Panc1 (cell line): ENCODE measurements at regions of chr13 and their contacts with region 1.

Region 1: DNA sequence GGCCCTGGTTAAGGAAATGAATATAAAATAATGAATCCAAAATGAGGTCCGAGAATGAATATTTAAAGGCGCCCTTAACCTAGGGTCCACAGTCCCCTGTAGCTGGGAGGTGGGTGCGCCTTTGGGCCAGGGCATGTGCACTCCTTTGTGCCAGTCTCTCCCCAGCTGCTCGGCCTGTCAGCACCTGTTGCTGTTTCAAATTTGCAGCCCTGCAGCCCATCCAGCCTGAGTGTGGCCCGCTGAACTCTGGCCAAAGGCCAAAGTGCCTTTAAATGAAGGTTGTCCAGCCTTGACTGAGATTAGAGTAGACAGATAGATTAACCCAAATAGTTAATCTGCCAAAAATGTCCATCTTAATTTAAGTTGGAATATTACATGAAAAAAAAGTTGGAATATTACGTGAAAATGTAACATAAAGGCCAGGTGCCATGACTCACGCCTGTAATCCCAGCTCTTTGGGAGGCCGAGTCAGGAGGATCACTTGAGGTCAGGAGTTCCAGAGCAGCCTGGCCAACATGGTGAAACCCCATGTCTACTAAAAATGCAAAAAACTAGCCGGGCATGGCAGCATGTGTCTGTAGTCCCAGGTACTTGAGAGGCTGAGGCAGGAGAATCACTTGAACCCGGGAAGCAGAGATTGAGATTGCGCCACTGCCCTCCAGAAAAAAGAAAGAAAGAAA is 25.4 kb downstream of the TPT1 start:
- DNase-seq: no peak
- ATAC-seq: no peak
- H3K4me3 ChIP-seq: no peak overlapping the region
- H3K27ac ChIP-seq: no peak overlapping the region
- H3K4me1 ChIP-seq: peaks cover 4% of the 10 kb centered on the region; the same call in 1 of the 2 replicates
- H3K27me3 ChIP-seq: no peaks in the 10 kb centered on the region
- CTCF ChIP-seq: no peak

Region 2: DNA sequence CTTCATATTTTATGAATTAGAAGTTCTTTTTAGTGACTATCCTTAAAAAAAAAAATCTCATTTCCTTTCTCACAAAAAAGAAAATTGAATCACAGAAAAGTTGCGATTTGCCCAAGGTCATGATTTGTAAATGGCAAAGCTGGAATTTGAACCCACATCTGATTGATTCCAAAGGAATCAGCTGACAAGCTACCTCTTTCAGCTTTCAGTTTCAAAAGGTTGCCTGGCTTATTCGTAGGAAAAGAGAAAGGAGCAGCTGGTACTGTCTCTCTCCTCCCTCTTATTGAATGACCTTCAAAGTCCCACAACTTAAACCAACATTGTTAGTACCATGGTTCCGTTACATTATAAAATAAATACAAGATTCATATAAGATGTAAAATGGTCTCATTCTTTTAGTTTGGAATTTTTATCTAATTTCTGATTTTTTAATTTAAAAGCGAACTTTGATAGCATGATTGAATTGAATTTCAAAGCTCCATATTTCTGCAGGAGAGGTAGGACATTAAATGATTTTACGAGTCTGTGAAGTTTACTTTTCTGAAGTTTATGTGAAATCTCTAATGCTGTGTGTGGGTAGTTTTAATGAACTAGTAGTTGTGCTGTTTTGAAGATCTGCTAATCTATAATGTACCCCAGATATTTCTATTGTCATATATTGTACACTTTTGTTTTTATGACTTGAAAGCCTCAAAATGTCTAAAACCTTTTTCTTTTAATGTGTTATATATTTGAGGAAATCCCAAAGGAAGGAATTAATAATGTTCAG is 96.3 kb before region 1 on chr13:
- CTCF ChIA-PET with region 1: no interaction called
- POLR2A ChIA-PET with region 1: interaction called, 14 read pairs
- in situ Hi-C with region 1: no loop called
- intact Hi-C with region 1: no loop called
- DNase-seq: no peak
- ATAC-seq: no peak
- H3K4me3 ChIP-seq: no peak overlapping the region
- H3K27ac ChIP-seq: peak overlapping the region; percentile 39; the same call in 1 of the 2 replicates
- H3K4me1 ChIP-seq: peaks cover 21% of the 10 kb centered on the region; the same call in 1 of the 2 replicates
- H3K27me3 ChIP-seq: no peaks in the 10 kb centered on the region
- CTCF ChIP-seq: no peak

Region 3: DNA sequence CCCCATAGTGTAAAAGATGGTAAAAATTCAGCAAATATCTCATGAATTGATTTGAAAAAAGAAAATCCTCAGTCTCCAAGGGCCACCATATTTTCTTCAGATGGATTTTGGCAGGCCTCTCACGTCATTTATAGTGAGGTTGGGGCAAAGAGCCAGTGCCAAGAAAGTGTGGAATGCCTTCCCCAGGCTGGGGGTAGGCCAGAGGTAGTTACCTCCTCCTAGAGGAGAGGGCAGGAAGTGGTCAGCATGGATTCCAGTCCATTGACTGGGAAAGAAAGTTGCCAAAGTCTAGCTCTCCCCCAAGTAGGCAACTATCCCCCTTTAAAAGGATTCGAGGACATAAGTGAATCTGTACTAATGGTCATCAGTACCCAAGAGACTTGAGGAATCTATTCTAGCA is 46.4 kb before region 1 on chr13:
- CTCF ChIA-PET with region 1: no interaction called
- POLR2A ChIA-PET with region 1: no interaction called
- in situ Hi-C with region 1: no loop called
- intact Hi-C with region 1: no loop called
- DNase-seq: no peak
- ATAC-seq: no peak
- H3K4me3 ChIP-seq: no peak overlapping the region
- H3K27ac ChIP-seq: no peak overlapping the region
- H3K4me1 ChIP-seq: no peaks in the 10 kb centered on the region
- H3K27me3 ChIP-seq: no peaks in the 10 kb centered on the region
- CTCF ChIP-seq: no peak

Region 4: DNA sequence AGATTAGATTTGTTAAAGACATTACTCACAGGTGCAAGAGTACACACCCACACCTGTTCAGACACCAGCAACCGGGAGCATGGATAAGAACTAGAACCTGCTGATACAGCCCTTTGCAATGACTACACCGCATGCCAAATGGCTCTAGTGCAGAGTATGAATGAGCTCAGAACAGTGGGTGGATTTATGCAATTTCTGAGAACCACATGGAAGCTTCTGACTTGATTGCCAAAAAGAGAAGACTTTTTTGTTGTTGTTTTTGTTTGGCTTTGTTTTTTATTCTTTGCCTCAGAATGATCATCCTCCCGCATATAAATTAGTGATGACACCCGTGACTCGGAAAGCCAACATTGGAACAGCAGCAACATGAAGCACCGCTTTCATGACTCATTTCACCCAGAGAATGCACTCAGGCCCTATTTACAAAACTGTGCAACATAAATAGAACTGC is 1159.9 kb after region 1 on chr13:
- CTCF ChIA-PET with region 1: no interaction called
- POLR2A ChIA-PET with region 1: no interaction called
- in situ Hi-C with region 1: no loop called
- intact Hi-C with region 1: no loop called
- DNase-seq: no peak
- ATAC-seq: no peak
- H3K4me3 ChIP-seq: no peak overlapping the region
- H3K27ac ChIP-seq: no peak overlapping the region
- H3K4me1 ChIP-seq: no peaks in the 10 kb centered on the region
- H3K27me3 ChIP-seq: no peaks in the 10 kb centered on the region
- CTCF ChIP-seq: no peak

Region 5: GRCh38 chr13:46553886-46554858 is 1238.5 kb after region 1 on chr13:
- CTCF ChIA-PET with region 1: no interaction called
- POLR2A ChIA-PET with region 1: no interaction called
- in situ Hi-C with region 1: no loop called
- intact Hi-C with region 1: no loop called
- DNase-seq: no peak
- ATAC-seq: peak; percentile 67
- H3K4me3 ChIP-seq: peak overlapping the region; percentile 80
- H3K27ac ChIP-seq: peak overlapping the region; percentile 80
- H3K4me1 ChIP-seq: peaks cover 11% of the 10 kb centered on the region
- H3K27me3 ChIP-seq: no peaks in the 10 kb centered on the region
- CTCF ChIP-seq: no peak